Ascending aorta (tissue), 2 donors: ENCODE measurements at regions of chr21 and their contacts with region 1.

Region 1: DNA sequence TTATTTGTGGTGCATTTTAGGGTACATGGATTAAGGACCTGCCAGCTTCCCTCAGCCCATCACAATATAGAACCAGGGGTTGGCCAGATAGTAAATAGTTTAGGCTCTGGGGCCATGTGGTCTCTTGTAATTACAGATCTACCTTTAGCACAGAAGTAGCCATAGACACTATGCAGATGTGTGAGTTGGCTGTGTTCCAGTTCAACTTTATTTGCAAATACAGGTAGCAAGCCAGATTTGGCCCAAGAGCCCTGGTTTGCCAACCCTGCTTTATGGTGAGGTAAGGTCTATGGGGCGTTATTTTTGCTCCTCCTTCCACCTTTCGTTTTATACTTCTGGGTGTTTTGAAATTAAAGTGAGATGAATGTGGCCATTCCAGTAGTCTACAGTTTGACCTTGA is 48.7 kb downstream of the MRPS6 start:
- DNase-seq: no peak
- H3K4me3 ChIP-seq: no peak overlapping the region
- H3K27ac ChIP-seq: peak overlapping the region in 1 of 2 donors; percentile 25
- H3K4me1 ChIP-seq: peaks cover 7 to 40% of the 10 kb centered on the region in 2 donors
- H3K27me3 ChIP-seq: no peaks in the 10 kb centered on the region
- CTCF ChIP-seq: no peak

Region 2: GRCh38 chr21:34004974-34005373 is 117.1 kb before region 1 on chr21:
- intact Hi-C with region 1: no loop called
- DNase-seq: peak in 1 of 2 donors; percentile 77
- H3K4me3 ChIP-seq: no peak overlapping the region
- H3K27ac ChIP-seq: peak overlapping the region; percentile 86
- H3K4me1 ChIP-seq: peaks cover 6 to 13% of the 10 kb centered on the region in 2 donors
- H3K27me3 ChIP-seq: no peaks in the 10 kb centered on the region
- CTCF ChIP-seq: no peak

Region 3: GRCh38 chr21:34100790-34101189 is 21.3 kb before region 1 on chr21:
- intact Hi-C with region 1: loop called (anchors 2 kb)
- DNase-seq: no peak
- H3K4me3 ChIP-seq: peak overlapping the region in 1 of 2 donors; percentile 19
- H3K27ac ChIP-seq: peak overlapping the region; percentile 50 to 58
- H3K4me1 ChIP-seq: peaks cover 4 to 51% of the 10 kb centered on the region in 2 donors
- H3K27me3 ChIP-seq: no peaks in the 10 kb centered on the region
- CTCF ChIP-seq: no peak

Region 4: GRCh38 chr21:34187935-34188334 is 65.9 kb after region 1 on chr21:
- intact Hi-C with region 1: no loop called
- DNase-seq: peak in 1 of 2 donors; percentile 58
- H3K4me3 ChIP-seq: no peak overlapping the region
- H3K27ac ChIP-seq: peak overlapping the region in 1 of 2 donors; percentile 44
- H3K4me1 ChIP-seq: peaks cover 3 to 18% of the 10 kb centered on the region in 2 donors
- H3K27me3 ChIP-seq: no peaks in the 10 kb centered on the region
- CTCF ChIP-seq: no peak